ENCODE measurements at regions of chr6 and their contacts with region 1.

Region 1: DNA sequence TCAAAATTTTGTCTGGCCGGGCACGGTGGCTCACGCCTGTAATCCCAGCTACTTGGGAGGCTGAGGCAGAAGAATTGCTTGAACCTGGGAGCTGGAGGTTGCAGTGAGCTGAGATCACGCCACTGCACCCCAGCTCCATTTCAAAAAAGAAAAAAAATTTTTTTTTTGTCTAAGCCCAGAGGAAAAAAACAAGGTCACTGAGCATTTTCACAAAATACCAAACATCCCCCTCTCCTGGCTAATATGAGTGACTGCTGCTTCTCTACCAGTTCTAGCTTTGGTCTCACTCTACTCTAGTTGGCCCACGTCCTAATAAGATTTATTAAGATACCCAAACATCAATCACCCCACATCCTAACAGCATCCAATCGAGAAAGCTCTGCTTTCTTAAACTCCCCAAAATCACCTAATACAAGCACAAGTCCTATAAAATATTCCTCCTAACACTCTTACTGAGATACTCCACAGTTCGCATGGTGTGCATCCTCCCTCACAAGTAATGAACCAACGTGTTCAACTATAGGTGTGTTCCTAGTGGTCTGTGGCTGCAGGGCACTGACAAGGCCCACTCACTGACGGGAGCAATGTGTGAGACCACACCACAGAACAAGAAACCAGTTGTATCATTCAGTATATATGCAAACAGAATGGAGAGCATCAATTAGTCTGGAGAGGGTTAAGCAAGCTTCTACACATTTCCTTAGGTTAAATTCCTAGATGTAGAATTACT is 64.2 kb downstream of the FKBP5 start:
- DNase-seq: no peak
- H3K4me3 ChIP-seq: no peak overlapping the region
- CTCF ChIP-seq: peak; percentile 46

Region 2: DNA sequence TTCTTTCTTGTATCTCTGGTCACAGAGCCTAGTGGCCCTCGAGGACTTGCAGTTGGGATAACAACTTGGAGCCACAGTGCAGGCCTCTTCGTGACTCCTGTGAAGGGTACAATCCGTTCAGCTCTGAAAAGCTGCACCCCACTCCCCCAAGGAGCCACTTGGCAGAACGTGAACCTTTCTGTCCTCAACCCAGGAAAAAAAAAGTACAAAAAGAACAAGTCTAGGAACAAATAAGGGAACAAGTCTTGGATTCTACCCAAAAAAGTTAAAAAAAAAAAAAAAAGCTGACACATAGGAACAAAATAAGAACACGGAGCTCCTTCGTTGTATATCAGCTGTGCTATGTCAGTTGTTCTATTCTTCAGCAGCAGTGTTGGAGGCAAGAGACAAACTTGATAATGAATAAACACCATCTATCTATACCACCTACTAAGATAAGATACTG is 33.9 kb before region 1 on chr6:
- CTCF ChIA-PET with region 1: interaction called, 45 read pairs
- POLR2A ChIA-PET with region 1: no interaction called
- DNase-seq: no peak
- H3K4me3 ChIP-seq: no peak overlapping the region
- CTCF ChIP-seq: no peak

Region 3: DNA sequence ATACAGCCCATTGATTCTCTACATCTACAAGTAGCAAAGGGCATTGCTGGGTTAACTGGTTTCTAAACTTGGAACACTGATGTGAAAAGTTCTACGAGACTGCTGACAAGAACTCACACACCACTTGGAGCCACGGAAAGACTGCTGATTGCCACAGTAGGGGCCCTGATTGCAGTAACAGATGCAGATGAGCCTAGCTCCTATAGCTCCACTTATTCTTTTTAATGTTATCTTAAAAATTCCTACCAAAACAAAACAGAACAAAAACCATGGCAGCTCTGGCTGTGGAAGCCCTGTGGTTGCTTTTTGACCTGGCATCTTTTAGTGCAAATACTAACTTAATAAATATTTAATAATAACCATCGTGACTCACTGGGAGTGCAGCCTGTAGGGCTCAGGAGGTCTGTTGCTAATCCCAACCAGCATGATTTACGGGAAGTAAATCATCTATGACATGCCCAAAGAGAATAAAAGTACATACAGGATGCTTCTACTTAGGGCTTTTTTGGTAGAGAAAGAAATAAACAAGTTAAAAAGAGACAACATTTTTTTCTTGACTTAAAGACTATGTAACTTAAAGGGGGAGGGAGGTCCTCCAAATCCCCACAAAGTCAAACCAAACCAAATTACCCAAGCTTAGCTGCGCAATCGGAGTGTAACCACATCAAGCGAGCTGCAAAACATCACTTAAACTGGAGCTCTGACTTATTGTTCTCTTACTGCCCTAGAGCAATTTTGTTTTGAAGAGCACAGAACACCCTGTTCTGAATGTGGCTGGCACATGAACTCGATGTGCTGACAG is 23.0 kb before region 1 on chr6:
- CTCF ChIA-PET with region 1: interaction called, 13 read pairs
- POLR2A ChIA-PET with region 1: no interaction called
- DNase-seq: no peak
- H3K4me3 ChIP-seq: peak overlapping the region; percentile 28
- CTCF ChIP-seq: no peak

Region 4: DNA sequence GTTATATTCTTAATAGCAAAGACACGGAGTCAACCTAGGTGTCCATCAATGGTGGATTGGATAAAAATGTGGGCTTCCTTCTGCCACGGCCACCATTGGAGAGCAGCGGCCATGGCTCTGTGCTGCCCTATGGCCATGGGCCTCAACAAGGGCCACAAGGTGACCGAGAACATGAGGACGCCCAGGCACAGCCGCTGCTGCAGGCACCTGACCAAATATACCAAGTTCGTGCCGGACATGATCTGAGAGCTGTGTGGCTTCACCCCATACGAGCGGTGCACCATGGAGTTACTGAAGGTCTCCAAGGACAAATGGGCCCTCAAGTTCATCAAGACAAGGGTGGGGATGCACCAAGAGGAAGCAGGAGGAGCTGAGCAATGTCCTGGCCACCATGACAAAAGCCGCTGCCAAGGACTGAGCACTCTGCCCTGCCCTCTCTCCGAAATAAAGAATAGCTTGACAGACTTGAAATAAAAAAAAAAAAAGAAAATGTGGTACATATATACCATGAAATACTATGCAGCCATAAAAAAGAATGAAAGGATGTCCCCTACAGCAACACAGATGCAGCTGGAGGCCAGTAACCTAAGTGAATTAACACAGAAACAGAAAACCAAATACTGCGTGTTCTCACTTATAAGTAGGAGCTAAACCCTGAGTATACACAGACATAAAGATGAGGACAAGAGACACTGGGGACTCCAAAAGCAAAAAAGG is 16.8 kb before region 1 on chr6:
- CTCF ChIA-PET with region 1: interaction called, 10 read pairs
- POLR2A ChIA-PET with region 1: no interaction called
- DNase-seq: no peak
- H3K4me3 ChIP-seq: no peak overlapping the region
- CTCF ChIP-seq: no peak

Region 5: DNA sequence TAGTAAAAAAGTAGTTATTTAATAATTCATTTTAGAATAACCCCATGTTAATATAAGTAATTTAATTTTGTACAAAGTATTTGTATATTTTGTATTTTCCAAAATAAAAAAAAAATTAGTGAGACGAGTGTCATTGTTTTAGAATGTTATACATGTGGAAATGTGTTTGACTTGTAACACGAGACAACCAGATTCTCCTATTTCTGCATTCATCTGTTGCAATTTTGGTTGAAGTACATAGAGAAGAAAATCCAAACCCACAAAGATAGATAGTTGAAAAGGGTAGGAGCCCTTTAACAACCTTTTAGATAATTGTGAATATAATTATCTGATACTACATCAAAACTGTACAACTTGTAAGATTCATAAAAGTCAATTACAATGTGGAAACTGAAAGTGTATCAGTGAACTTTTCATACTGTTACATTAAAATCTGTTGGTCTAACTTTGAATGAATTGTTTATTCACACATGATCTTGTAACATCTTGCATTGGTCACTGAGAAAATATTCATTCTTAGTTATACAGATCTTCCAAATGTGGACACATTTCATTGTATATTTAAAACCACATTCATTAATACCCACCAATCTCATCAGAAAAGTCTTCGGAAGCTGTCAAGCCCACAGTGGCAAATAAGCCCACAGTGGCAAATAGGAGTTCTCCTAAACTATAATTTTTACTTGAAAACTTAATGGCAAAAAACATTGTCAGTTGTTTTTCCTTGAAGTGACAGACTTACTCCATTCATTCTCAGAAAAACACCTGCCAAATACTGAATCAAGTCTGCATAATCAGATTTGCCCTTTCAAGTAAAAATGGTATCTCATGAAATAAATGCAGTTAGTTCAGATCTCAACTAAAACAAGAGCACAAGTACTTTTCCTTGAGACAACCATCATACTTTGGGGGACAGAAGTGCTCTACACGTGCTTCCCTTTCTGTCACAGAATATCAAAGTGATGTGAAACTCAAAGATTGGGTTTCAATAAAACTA is 11.4 kb after region 1 on chr6:
- CTCF ChIA-PET with region 1: interaction called, 10 read pairs
- POLR2A ChIA-PET with region 1: no interaction called
- DNase-seq: no peak
- H3K4me3 ChIP-seq: no peak overlapping the region
- CTCF ChIP-seq: no peak

Region 6: DNA sequence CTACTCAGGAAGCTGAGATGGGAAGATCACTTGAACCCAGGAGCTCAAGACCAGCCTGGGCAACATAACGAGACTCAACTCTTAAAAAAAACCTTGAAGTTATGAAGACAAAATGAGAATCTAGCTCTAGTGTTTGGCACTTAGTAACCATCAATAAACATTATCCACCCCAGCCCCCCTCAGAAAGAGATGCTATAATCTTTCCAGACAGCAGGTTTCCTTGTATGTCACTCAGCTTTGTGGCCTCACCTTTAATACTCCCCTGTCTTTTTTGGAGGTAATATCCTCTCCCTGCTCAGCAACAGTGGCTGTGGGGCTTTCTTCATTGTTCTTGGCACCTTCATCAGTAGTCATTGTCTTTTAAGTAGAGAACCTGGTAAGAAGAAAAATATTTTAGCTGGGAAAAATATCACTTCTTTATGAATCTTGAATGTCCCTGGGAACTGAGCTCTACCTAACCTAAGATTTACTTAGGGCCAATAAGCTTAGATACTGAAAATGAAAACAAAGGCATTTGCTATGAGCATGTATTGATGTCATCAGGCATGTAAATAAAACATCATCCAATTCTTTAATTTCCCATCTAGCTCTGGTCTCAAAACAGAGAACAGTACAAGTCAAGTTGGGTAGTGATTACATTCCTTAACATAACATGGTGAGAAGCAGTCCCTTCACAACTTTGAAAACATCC is 18.1 kb after region 1 on chr6:
- CTCF ChIA-PET with region 1: interaction called, 10 read pairs
- POLR2A ChIA-PET with region 1: no interaction called
- DNase-seq: no peak
- H3K4me3 ChIP-seq: no peak overlapping the region
- CTCF ChIP-seq: no peak

Region 7: DNA sequence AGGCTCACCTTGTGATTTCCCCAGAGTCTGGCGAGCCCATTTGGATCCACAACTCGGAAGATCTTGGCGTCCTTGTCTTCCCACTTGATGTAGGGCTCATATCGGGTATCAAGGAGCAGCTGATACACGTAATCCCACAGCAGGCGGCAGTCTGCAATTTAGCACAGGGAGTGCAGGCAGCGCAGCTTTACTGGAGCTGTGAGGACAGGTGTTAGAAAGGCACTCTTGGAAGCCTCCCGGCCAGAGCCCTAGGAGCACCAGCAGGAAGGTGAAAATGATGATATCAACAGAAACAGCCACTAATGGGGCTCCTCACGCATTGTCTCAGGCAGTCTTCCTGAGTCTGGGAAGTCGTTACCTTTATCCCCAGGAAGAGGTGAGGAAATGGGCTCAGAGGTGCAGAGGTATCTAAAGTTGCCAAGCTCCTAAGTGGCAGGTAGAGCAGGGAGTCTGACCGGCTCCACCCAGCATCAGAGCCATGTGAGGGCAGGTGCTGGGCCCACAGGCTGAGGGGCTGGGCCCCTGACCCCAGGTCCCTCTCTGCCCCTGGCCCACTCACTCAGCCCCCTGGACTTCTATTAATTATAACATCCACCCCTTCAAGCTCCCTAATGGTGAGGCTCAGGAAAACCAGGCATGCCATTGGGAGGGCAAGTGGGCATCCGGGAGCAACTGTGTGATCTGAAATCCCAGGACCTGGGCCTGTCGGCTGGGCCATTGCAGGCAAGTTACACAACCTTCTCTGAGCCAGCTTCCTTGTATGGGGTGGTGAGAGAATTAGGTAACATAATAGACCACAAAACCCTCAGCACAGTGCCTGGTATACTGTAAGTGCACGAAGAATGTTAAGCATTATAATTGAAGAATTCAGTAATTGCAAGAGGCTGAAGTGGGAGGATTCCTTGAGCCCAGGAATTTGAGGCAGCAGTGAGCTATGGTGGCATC is 744.7 kb after region 1 on chr6:
- CTCF ChIA-PET with region 1: no interaction called
- POLR2A ChIA-PET with region 1: no interaction called
- DNase-seq: peak; percentile 93
- H3K4me3 ChIP-seq: no peak overlapping the region
- CTCF ChIP-seq: no peak